ENCODE measurements at regions of chr19 and their contacts with region 1.

Region 1: GRCh38 chr19:39532233-39533002 is at the start of gene EID2B:
- DNase-seq: peak; percentile 96
- ATAC-seq: peak; percentile 96
- H3K4me3 Mint-ChIP-seq: peak within 1 kb of the TSS; percentile 91
- H3K27ac Mint-ChIP-seq: peak within 1 kb of the TSS; percentile 87
- H3K4me1 Mint-ChIP-seq: peaks cover 24% of the 10 kb centered on the region
- H3K27me3 Mint-ChIP-seq: no peaks in the 10 kb centered on the region
- total RNA-seq, gene EID2B: 4.7 to 7.4 TPM

Region 2: DNA sequence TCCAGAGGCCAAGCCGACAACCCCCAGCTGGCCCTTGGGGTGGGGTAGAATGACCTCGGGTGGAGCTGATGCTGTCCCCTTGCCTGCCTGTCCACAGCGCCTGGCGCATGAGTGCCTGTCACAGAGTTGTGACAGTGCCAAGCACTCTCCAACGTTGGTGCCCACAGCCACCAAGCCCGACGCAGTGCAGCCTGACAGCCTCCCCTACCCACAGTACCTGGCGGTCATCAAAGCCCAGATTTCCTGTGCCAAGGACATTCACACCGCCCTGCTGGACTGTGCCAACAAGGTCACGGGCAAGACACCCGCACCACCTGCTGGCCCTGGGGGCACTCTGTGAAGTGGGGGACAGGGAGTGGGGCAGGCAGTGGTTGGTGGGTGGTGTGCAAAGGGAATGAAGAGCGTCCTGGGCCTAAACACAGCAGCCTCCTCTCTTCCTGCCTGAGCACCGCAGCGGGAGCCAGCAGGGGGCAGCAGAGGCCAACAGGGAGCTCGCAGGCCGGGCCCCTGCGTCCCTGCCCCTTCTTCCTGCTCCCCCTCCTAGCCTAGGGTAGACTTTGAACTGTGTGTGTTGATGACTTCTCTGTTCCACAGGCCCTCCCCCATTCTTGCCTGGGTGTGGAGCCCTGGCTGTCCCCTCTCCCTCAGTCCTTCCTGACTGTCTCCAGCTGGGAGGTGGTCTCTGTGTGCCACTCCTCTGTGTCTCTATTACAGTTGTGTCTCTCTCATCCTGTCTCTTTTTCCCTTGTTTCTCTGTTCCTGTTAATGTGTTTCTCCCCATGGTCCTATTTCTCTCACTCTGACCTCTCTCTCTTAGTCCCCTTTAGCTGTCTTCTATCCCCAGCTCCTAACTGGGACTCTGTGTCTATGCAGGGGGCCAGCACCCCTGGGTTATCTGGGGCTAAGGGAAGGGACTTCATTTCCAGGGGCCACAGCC is 134.8 kb before region 1 on chr19:
- CTCF ChIA-PET with region 1: interaction called, 14 read pairs
- DNase-seq: peak; percentile 96
- ATAC-seq: peak; percentile 66
- H3K4me3 Mint-ChIP-seq: peak overlapping the region; percentile 49
- H3K27ac Mint-ChIP-seq: peak overlapping the region; percentile 90
- H3K4me1 Mint-ChIP-seq: peaks cover 67% of the 10 kb centered on the region
- H3K27me3 Mint-ChIP-seq: no peaks in the 10 kb centered on the region

Region 3: DNA sequence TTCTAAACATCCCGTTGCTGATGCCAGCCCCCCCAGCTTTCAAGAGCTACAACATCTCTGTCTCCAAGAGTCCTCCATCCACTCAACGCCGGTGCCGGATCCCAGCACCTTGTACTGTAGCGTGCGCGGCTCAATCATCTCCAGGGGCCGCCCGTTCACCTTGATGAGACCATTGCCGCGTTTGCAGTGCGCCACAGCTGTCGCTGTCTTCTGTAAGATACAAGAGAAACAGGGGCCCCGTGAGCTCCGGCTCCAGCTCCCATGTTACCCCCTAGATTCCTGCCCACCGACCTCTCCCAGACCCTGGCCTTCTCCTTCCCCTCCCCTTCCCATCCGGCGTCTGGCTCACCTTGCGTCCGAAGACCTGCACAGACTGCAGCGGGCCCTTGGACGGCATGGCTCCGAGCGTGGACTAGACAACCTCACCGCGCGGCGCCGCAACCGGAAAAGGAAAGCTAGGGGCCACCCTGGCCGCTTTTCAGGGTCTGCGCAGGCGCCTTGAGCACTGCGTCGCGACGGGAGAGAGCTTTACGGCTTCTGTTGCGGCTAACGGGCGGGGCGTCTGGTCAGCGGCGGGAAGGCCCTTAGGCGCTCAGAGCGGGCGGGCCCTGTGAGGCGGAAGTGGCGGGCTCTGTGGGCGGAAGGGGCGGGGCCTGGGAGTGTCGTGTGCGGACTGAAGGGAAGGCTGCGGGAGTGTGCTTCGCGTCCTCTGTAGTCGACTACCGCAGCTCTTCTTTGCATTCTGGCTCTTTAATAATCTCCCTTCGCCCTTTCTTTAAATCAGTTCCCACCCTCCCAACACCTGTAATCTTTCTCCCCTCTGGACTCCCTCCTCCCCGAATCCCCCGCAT is 96.7 kb before region 1 on chr19 and contains the start of gene RPS16:
- CTCF ChIA-PET with region 1: interaction called, 59 read pairs
- DNase-seq: peak; percentile 99
- ATAC-seq: peak; percentile 87
- H3K4me3 Mint-ChIP-seq: peak within 1 kb of the TSS; percentile 99
- H3K27ac Mint-ChIP-seq: peak within 1 kb of the TSS; percentile 99
- H3K4me1 Mint-ChIP-seq: peaks cover 55% of the 10 kb centered on the region
- H3K27me3 Mint-ChIP-seq: peaks cover 4% of the 10 kb centered on the region
- total RNA-seq, gene RPS16: 1,815 to 2,117 TPM

Region 4: DNA sequence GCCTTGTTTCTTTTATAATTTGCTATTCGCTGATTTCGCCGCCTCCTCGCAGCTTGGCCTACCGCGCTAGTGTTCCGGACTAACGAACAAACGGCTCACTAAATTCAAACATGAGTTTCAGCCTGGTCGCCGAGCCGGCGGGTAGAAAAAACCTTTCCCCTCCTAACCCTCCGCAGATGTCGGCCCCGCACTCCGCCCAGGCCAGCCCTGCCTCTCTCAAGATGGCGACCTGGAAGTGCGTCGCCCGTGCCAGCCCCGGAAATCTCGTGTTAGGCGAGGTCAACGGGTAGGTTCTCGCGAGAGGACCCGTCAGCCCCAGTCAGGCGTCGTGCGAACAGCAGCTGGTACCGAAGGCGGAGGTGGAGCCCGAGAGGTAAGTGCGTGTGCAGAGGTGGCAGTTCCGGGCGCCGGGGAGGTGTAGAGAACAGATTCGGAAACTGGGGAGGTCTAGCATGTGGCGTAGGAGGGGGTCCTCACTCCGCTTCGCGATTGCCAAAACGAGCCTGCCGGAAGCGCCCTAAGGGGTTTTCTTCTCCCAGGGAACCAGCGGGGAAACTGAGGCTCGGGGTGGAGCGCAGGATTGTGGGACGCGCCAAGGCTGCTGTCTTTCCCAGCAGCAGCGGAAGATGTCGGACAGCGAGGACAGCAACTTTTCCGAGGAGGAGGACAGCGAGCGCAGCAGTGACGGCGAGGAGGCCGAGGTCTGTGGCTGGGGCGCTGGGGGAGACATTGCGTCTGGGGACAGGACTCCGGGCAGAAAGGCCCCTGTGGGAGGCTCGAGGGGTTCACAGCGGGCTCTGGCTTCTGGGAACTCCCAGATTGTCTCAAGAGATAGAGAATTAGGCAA is 86.9 kb before region 1 on chr19 and contains the start of gene SUPT5H:
- CTCF ChIA-PET with region 1: interaction called, 59 read pairs
- DNase-seq: peak; percentile 99
- ATAC-seq: peak; percentile 94
- H3K4me3 Mint-ChIP-seq: peak within 1 kb of the TSS; percentile 100
- H3K27ac Mint-ChIP-seq: peak within 1 kb of the TSS; percentile 99
- H3K4me1 Mint-ChIP-seq: peaks cover 52% of the 10 kb centered on the region
- H3K27me3 Mint-ChIP-seq: no peaks in the 10 kb centered on the region
- total RNA-seq, gene SUPT5H: 144 to 181 TPM

Region 5: DNA sequence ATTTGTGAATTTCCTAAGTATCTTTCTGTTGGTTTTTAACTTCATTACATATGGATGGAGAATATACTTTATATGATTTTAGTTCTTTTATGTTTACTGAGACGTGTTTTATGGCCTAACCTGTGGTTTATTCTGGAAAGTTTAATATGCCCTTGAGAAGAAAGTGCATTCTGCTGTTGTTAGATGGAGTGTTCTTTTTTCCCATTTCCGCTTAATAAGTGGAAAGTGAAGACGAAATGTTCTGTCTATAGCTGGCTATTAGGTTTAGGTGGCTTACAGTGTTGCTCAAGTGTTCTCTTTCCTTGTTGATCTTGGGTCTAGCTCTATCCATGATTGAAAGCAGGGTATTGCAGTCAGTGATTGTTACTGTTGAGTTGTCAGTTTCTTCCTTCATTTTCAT is 69.0 kb before region 1 on chr19:
- CTCF ChIA-PET with region 1: no interaction called
- DNase-seq: no peak
- ATAC-seq: no peak
- H3K4me3 Mint-ChIP-seq: no peak overlapping the region
- H3K27ac Mint-ChIP-seq: no peak overlapping the region
- H3K4me1 Mint-ChIP-seq: peaks cover 2% of the 10 kb centered on the region
- H3K27me3 Mint-ChIP-seq: no peaks in the 10 kb centered on the region

Region 6: DNA sequence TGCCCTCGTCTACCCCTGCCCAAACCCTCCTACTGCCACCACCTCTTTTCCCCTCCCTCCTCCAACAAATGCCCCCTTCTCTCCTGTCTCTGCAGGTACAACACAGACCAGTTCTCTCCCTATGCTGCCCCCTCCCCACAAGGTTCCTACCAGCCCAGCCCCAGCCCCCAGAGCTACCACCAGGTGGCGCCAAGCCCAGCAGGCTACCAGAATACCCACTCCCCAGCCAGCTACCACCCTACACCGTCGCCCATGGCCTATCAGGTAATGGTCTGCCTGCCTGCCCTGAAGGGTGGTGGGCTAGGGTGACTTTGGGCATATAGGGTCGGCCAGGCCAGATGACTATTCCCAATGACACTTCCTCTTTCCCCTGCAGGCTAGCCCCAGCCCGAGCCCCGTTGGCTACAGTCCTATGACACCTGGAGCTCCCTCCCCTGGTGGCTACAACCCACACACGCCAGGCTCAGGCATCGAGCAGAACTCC is 58.2 kb before region 1 on chr19:
- CTCF ChIA-PET with region 1: interaction called, 37 read pairs
- DNase-seq: peak; percentile 67
- ATAC-seq: peak; percentile 83
- H3K4me3 Mint-ChIP-seq: no peak overlapping the region
- H3K27ac Mint-ChIP-seq: no peak overlapping the region
- H3K4me1 Mint-ChIP-seq: peaks cover 11% of the 10 kb centered on the region
- H3K27me3 Mint-ChIP-seq: no peaks in the 10 kb centered on the region

Region 7: GRCh38 chr19:39502640-39503417 is 29.6 kb before region 1 on chr19:
- CTCF ChIA-PET with region 1: interaction called, 22 read pairs
- DNase-seq: peak; percentile 76
- ATAC-seq: peak; percentile 71
- H3K4me3 Mint-ChIP-seq: no peak overlapping the region
- H3K27ac Mint-ChIP-seq: no peak overlapping the region
- H3K4me1 Mint-ChIP-seq: peaks cover 30% of the 10 kb centered on the region
- H3K27me3 Mint-ChIP-seq: peaks cover 68% of the 10 kb centered on the region

Measured in activated CD8-positive, alpha-beta memory T cell treated with anti-CD3 and anti-CD28 coated beads, Interleukin-2, amount 10 ng/mL, durations not matched to agents 7 days and 5 days (primary cell).